ENCODE measurements at regions of chr1 and their contacts with region 1.

Region 1: GRCh38 chr1:145690624-145691035 is 16.5 kb downstream of the PDZK1 start:
- DNase-seq: peak; percentile 83
- ATAC-seq: peak; percentile 98
- H3K4me3 Mint-ChIP-seq: peak overlapping the region; percentile 37
- H3K27ac Mint-ChIP-seq: peak overlapping the region; percentile 83
- H3K4me1 Mint-ChIP-seq: peaks cover 32% of the 10 kb centered on the region
- H3K27me3 Mint-ChIP-seq: no peaks in the 10 kb centered on the region

Region 2: GRCh38 chr1:145720877-145721671 is 30.4 kb after region 1 on chr1:
- CTCF ChIA-PET with region 1: interaction called, 15 read pairs
- DNase-seq: peak; percentile 82
- ATAC-seq: peak; percentile 88
- H3K4me3 Mint-ChIP-seq: peak overlapping the region; percentile 70
- H3K27ac Mint-ChIP-seq: peak overlapping the region; percentile 81
- H3K4me1 Mint-ChIP-seq: peaks cover 54% of the 10 kb centered on the region
- H3K27me3 Mint-ChIP-seq: peaks cover 11% of the 10 kb centered on the region